ENCODE measurements at regions of chr2 and their contacts with region 1.

Region 1: GRCh38 chr2:170715062-170715931 is at the start of gene SP5:
- DNase-seq: peak; percentile 31 to 56
- ATAC-seq: peak; percentile 38 to 66 (median 42)
- H3K4me3 ChIP-seq: peak within 1 kb of the TSS; percentile 69
- H3K27ac ChIP-seq: no peak within 1 kb of the TSS
- H3K4me1 ChIP-seq: peaks cover 5% of the 10 kb centered on the region
- H3K27me3 ChIP-seq: peaks cover 0 to 95% (median 32%) of the 10 kb centered on the region in 3 donors
- CTCF ChIP-seq: no peak
- total RNA-seq, gene SP5: 0.11 to 1.0 (median 0.13) TPM in 3 of 4 donors, not detected in the other

Region 2: DNA sequence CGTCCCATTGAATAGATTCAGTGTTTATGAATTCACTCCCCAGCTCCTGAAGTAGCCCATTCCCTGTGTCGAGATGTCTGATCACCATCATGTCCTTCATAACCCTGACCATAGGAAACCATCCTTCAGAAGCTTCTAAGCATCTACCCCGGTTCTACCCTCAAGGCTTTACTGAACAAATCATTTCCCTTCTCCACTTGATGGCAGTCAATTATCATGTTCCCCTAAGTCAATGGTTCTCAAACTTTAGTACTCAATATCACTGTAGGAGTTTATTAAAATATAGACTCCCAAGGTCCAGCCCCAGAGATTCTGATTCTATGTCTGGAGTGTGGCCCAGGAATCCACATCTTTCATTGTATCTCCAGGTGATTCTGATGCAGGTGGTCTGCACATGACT is 228.6 kb before region 1 on chr2:
- intact Hi-C with region 1: loop called in 1 of 2 experiments (anchors 5 kb)
- DNase-seq: no peak
- ATAC-seq: peak in 2 of 4 donors; percentile 38 to 54
- H3K4me3 ChIP-seq: no peak overlapping the region
- H3K27ac ChIP-seq: no peak overlapping the region
- H3K4me1 ChIP-seq: no peaks in the 10 kb centered on the region
- H3K27me3 ChIP-seq: no peaks in the 10 kb centered on the region
- CTCF ChIP-seq: peak; percentile 32

Measured in psoas muscle (tissue), 8 donors.